Activated T-helper 1 cell treated with anti-CD3 and anti-CD28 coated beads, Interleukin-12 subunit alpha, Interleukin-12 subunit beta, Interleukin-2, Interleukin-4 antibody, amounts not matched to agents 30 ng/mL and 10 ng/mL and 1 ng/mL, durations not matched to agents 14 hours and 24 hours and 36 hours (primary cell): ENCODE measurements at regions of chr6 and their contacts with region 1.

Region 1: DNA sequence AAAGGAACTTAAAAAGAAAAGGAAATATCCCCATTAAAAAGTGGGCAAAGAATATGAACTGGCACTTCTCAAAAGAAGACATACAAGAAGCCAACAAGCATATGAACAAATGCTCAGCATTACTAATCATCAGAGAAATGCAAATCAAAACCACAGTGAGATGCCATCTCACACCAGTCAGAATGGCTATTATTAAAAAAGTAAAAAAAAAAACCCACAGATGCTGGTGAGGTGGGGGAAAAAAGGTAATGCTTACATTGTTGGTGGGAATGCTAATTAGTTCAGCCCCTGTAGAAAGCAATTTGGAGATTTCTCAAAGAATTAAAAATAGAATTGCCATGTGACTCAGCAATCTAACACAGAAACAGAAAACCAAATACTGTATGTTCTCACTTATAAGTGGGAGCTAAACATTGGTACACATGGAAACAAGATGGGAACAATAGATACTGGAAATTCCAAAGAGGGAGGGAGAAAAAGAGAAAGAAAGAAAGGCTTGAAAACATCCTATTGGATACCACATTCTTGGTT is 437.1 kb downstream of the GRIK2 start:
- DNase-seq: no peak
- H3K4me3 Mint-ChIP-seq: no peak overlapping the region
- H3K27ac Mint-ChIP-seq: no peak overlapping the region
- H3K4me1 Mint-ChIP-seq: no peaks in the 10 kb centered on the region
- H3K27me3 Mint-ChIP-seq: no peaks in the 10 kb centered on the region

Region 2: GRCh38 chr6:101806241-101806640 is 24.3 kb before region 1 on chr6:
- intact Hi-C with region 1: loop called (anchors 1 kb)
- DNase-seq: no peak
- H3K4me3 Mint-ChIP-seq: no peak overlapping the region
- H3K27ac Mint-ChIP-seq: no peak overlapping the region
- H3K4me1 Mint-ChIP-seq: no peaks in the 10 kb centered on the region
- H3K27me3 Mint-ChIP-seq: no peaks in the 10 kb centered on the region

Region 3: GRCh38 chr6:101878554-101879276 is 48.1 kb after region 1 on chr6:
- intact Hi-C with region 1: no loop called
- DNase-seq: no peak
- H3K4me3 Mint-ChIP-seq: no peak overlapping the region
- H3K27ac Mint-ChIP-seq: no peak overlapping the region
- H3K4me1 Mint-ChIP-seq: no peaks in the 10 kb centered on the region
- H3K27me3 Mint-ChIP-seq: no peaks in the 10 kb centered on the region